ENCODE measurements at regions of chr19 and their contacts with region 1.

Region 1: DNA sequence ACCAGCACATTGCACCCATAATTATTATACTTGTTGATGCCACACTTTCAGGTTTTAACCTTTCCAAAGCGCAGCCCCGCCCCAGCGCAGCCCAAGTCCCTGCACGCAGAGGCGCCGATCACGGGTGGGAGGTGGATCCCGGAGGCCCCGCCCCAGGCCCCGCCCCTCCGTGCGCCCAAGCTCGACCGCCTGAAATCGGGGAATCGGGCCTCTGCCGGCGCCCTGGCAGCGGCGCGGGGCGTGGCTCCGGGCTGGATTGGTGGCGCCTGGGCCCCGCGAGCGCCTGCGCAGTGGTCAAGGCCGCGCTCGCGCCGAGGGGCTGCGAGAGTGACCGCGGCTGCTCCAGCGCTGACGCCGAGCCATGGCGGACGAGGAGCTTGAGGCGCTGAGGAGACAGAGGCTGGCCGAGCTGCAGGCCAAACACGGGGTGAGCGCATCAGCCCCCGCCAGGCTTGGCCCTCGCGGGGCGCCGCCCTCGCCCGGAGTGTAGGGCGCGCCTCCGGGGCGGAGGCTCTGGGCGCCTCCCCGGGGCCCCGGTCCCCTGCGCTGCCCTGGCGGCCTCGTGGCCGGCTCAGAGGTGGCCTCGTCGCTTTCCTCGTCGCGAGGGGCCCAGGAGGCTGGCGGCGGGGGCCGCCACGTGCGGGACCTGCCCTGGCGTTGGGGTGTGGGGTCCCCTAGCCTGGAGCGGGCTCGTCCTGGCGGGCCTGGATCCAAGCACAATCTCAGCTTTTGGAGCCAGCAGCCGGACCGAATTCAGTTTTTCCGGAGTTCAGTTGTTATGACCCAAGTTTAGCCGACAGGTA is at the start of gene PDCD5:
- DNase-seq: peak; percentile 98 to 99
- ATAC-seq: peak; percentile 99 to 100 (median 99)
- H3K4me3 ChIP-seq: peak within 1 kb of the TSS; percentile 94
- H3K27ac ChIP-seq: peak within 1 kb of the TSS; percentile 82
- H3K4me1 ChIP-seq: peaks cover 10% of the 10 kb centered on the region
- H3K27me3 ChIP-seq: no peaks in the 10 kb centered on the region
- CTCF ChIP-seq: no peak
- total RNA-seq, gene PDCD5: 86.5 to 173 (median 100) TPM

Region 2: GRCh38 chr19:32674959-32675719 is 94.0 kb after region 1 on chr19 and contains the start of gene ANKRD27:
- intact Hi-C with region 1: loop called in 1 of 2 experiments (anchors 10 kb)
- DNase-seq: peak; percentile 99
- ATAC-seq: peak; percentile 91 to 96 (median 93)
- H3K4me3 ChIP-seq: peak within 1 kb of the TSS; percentile 99
- H3K27ac ChIP-seq: peak within 1 kb of the TSS; percentile 96
- H3K4me1 ChIP-seq: peaks cover 27% of the 10 kb centered on the region
- H3K27me3 ChIP-seq: peaks cover 0 to 3% (median 0%) of the 10 kb centered on the region in 3 donors
- CTCF ChIP-seq: no peak
- total RNA-seq, gene ANKRD27: 11.2 to 31.7 (median 18.8) TPM

Measured in psoas muscle (tissue), 8 donors.